ENCODE measurements at regions of chr2 and their contacts with region 1.

Region 1: DNA sequence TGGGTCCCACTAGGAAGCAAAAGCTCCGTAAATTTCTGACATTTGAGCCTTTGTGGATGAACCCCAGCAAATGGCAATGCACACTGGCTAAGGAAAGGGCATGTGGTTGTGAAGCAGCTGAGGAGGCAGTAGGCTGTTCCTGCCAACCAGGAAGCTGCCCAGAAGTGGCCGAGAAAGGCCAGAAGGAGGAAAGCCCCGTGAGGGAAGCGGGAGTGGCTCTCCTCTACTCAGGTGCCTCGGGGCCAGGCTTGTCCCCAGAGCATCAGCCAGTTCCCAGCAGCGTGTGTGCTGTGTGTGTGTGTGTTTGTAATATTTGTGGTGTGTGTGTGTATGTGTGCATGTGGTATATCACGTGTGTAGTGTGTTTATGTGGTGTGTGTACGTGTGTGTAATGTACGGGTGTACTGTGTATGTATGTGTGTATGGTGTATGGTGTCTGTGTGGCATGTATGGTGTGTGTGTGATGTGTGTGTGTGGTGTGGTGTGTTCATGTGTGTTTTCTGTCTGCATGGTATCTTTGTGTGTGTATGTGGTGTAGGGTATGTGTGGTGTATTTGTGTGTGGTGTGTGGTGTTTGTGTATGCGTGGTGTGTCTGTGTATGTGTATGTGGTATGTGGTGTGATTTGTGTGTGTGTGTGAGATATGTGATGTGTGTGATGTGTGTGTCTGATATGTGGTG is 90.6 kb downstream of the APOB start:
- DNase-seq: no peak
- ATAC-seq: no peak
- H3K4me3 ChIP-seq: no peak overlapping the region
- H3K27ac ChIP-seq: no peak overlapping the region
- H3K4me1 ChIP-seq: no peaks in the 10 kb centered on the region
- H3K27me3 ChIP-seq: peaks cover 0 to 10% (median 0%) of the 10 kb centered on the region in 9 donors
- CTCF ChIP-seq: no peak
- POLR2A ChIP-seq: no peak

Region 2: DNA sequence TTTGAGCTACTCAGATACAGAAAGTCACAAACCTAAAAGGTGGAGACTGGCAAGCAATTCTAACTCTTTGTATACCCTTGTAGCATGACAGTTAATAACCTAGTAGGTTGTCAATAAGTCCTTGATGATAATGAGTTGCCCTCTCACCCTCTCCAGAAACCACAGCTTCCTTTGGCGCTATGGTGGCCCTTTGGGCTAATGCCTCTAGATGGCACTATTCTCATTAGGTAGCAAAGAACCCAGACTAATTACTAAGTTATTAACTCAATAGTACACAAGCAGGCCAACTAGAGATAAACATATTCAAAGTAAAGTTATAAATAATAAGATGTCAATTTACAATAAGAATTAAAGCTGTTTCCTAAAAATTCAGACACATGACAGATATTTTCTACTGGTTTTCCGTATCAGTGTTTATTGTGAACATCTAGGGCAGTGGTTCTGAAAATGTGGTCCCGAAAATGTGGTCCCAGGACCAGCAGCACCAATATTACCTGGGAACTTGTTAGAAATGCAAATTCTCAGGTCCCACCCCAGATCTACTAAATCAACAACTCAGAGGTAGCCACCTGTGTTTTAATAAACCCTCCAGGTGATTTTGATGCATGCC is 171.5 kb before region 1 on chr2:
- intact Hi-C with region 1: loop called in 1 of 10 experiments (anchors 10 kb)
- DNase-seq: no peak
- ATAC-seq: no peak
- H3K4me3 ChIP-seq: no peak overlapping the region
- H3K27ac ChIP-seq: no peak overlapping the region
- H3K4me1 ChIP-seq: no peaks in the 10 kb centered on the region
- H3K27me3 ChIP-seq: no peaks in the 10 kb centered on the region
- CTCF ChIP-seq: peak; percentile 26 to 58 (median 44)
- POLR2A ChIP-seq: no peak